Prostate gland (tissue), 2 donors: ENCODE measurements at regions of chr3 and their contacts with region 1.

Region 1: DNA sequence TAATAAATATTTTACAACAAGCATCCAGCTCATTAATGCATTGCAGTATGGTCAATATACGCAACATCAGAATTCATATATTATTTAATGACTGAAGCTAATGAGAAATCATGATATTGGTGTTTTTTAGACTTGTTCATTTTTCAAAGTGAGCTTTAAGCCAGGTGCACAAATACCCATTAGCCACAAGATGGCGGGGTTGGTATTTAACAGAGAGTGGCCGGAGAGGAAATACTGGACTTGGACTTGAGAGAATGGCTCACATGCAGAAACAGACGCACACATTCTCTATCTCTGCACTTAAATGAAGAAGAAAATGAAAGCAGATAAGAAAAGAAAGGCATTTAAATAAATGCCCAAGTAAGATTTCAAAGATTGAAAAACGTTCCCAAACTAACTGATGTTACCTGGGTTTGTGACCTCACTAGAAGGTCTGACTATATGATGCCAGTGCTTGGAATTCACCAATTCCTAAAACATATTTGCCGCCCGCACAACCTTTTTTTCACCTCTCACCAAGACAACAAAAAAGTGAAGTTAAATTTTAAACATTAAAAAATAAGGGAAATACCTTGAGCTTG is 21.2 kb upstream of the CRBN start:
- DNase-seq: peak; percentile 37
- H3K4me3 ChIP-seq: no peak overlapping the region
- H3K27ac ChIP-seq: no peak overlapping the region
- H3K4me1 ChIP-seq: no peaks in the 10 kb centered on the region
- H3K27me3 ChIP-seq: peaks cover 4% of the 10 kb centered on the region
- CTCF ChIP-seq: peak; percentile 54 to 87 (median 74)
- POLR2A ChIP-seq: no peak

Region 2: DNA sequence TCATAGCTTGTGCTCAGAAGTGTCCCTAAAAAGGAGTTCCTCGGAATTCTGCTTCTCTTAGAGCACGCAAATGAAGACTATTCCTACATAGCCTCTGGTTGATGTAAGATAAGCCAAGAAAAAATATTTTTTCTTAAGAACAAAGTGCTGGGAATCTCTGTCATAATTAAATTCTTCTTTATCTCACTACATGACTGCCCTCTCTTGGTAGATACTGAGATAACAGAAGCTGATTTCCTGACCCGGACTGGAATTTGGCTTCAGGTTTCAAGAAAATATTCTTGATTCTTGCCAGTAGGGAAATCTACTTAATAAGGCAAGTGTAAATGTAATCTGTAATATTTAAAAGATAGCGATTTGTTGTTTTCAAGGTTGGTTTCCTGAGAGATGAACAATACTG is 1071.1 kb after region 1 on chr3:
- intact Hi-C with region 1: loop called (anchors 5 kb)
- DNase-seq: no peak
- H3K4me3 ChIP-seq: no peak overlapping the region
- H3K27ac ChIP-seq: no peak overlapping the region
- H3K4me1 ChIP-seq: no peaks in the 10 kb centered on the region
- H3K27me3 ChIP-seq: no peaks in the 10 kb centered on the region
- CTCF ChIP-seq: peak; percentile 19 to 63 (median 46)
- POLR2A ChIP-seq: no peak

Region 3: GRCh38 chr3:4290272-4290893 is 1089.7 kb after region 1 on chr3:
- intact Hi-C with region 1: loop called (anchors 5 kb)
- DNase-seq: no peak
- H3K4me3 ChIP-seq: no peak overlapping the region
- H3K27ac ChIP-seq: no peak overlapping the region
- H3K4me1 ChIP-seq: no peaks in the 10 kb centered on the region
- H3K27me3 ChIP-seq: no peaks in the 10 kb centered on the region
- CTCF ChIP-seq: peak; percentile 69 to 88 (median 82)
- POLR2A ChIP-seq: no peak